Left cardiac atrium (tissue), 4 donors: ENCODE measurements at regions of chr6 and their contacts with region 1.

Region 1: DNA sequence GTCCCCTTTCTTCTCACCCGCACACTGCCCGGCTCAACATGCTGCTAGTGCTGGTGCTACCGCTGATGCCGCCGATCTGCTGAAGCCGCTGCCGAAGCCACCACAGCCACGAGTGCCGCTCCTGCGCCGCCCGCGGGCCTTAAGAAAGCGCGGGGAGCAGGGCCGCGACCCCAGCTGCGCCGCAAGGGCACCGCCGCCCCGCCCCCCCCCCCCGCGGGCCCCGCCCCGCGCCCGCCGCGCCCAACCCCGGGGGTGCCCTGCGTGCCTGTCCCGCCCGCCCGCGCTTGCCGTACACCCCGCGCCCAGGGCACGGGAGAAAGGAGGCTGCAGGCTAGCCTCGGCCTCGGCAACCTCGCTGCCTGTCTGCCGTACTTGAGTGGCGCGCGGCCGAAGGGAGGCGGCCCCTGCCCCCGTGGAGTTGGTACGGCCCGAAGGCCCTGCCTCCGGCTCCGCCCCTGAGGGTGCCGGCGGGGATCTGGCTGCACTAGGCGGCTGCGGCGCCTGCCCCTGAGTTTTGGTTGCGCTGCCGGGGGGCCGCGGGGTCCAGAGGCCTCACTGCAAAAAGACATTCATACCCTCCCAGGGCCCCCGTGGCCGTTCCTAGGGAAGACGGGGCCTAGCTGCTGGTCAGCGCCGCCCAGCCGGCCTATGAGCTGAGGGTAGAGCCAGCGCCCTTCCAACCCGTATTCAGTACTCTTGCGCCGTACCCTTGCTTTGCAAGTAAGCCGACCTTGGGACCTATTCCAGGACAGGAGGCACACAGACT is at the start of gene SOD2:
- DNase-seq: peak; percentile 88
- ATAC-seq: peak; percentile 88 to 91
- total RNA-seq, gene SOD2: 527 to 576 TPM

Region 2: DNA sequence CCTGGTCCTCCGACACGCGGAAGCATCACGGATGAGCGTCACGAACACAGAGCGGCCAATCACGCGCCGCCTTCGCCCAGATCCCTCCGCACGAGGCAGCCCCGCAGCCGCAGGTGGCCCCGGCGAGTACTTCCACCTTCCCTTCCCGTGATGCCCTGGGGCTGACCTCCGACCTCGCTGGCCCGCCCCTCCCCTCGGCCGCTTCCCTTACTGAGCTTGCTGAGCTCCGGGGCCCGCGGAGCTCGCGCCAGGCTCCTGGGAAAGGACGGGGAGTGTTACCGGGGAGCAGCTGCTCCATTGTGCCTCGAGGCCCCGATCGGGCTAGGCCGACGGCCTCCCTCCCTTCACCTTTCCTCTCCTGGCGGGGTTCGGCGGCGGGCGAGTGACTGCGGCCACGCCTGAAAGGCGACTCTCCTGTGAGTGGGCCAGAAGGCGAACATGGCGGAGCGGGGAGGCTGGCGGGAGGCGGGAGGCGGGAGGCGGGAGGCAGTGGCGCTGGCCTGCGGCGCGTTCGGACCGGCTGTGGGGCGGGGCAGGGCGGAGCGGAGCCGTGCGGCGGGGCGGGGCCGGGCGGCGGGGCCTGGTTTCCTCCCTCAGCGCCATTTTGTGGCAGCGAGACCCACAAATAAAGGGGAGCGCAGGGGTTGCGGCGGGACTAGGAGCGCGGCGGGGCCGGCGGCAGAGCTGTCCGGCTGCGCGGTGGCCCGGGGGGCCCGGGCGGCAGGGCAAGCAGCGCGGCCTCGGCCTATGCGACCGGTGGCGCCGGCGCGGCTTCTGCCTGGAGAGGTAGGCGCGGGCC is 33.8 kb after region 1 on chr6 and contains the start of gene WTAP:
- intact Hi-C with region 1: loop called in 1 of 2 experiments (anchors 1 kb)
- DNase-seq: peak; percentile 96
- ATAC-seq: peak; percentile 97
- total RNA-seq, gene WTAP: 42.1 to 57.4 TPM

Region 3: DNA sequence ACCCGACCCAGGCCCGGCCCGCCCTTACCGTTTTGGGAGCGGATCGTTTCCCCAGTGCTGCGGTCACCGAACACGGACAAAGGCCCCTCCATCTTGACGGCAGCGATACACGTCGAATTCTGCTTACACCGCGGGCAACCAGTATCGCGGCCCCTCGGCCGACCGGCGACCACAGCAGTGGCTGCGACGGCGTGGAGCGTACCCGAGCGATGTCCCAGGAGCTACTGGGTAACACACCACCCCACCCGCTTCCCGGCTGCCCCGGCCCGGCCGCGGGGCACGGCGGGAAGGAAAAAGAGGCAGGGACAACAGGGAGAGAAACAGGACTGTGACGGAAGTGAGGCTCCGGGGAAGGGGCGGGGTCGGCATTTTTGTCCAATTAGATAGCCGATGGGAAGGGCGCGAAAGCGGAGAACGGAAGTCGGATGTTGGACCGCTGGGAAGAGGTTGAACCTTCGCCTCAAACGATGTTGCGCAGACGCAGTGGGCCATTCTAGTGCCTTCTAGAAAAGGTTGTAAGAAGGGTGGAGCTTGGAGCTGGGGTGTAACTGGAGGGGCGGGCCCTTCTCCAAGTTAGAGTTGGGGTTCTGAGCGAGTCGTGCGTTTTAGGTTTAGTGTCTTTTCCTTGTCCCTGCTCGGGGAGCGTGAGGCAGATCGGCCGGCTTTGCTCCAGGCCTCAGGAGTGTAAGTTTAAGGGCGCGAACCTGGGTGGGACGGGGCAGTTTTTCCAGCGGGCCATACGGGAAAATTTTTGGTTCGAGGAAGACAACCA is 96.3 kb after region 1 on chr6 and contains the start of gene TCP1:
- intact Hi-C with region 1: loop called in 1 of 2 experiments (anchors 2 kb)
- DNase-seq: peak; percentile 100
- ATAC-seq: peak; percentile 91 to 94
- total RNA-seq, gene TCP1: 145 to 165 TPM